WTC11 (cell line): ENCODE measurements at regions of chr1 and their contacts with region 1.

Region 1: DNA sequence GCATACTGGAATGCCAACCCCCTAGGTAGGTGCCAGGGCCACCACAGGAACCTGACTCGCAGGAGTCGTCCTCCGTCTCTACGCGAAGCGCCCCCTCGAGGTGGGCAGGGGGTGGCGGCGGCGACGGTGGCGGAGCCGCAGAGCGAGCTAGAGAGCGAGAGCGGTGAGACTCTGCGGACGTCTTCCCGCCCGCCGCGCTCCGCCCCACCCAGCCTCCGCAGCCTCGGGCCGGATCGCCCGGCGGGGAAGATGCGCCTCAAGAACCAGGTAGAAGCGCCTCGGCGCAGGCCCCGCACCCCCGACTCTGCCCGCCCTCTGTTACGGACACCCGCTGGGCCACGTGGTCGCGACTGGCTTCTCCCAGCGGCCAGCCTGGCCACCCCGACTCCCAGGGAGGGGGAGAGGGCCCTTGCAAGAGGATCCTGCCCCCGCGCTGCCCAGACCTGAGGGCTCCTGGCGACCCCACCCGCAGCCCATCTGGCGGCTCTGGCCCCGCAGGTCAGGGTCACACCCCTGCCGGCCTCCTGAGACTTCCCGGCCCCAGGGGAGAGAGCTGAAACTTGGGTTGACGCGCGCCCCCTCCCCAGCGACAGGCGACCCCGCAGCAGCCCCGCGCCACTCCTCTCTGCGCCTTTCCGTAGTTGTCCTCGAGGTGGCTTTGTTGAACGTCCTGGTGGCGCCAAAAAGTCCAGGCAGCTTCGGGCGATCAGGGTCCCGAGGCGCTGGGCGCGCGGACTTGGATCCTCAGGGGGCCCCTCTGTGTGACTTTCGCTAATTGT is 24.4 kb upstream of the AGBL4 start:
- DNase-seq: peak; percentile 91
- ATAC-seq: peak; percentile 94
- H3K4me3 Mint-ChIP-seq: peak overlapping the region; percentile 63
- H3K27ac Mint-ChIP-seq: no peak overlapping the region
- H3K4me1 Mint-ChIP-seq: peaks cover 16% of the 10 kb centered on the region
- H3K27me3 Mint-ChIP-seq: peaks cover 44% of the 10 kb centered on the region
- CTCF ChIP-seq: peak; percentile 68

Region 2: DNA sequence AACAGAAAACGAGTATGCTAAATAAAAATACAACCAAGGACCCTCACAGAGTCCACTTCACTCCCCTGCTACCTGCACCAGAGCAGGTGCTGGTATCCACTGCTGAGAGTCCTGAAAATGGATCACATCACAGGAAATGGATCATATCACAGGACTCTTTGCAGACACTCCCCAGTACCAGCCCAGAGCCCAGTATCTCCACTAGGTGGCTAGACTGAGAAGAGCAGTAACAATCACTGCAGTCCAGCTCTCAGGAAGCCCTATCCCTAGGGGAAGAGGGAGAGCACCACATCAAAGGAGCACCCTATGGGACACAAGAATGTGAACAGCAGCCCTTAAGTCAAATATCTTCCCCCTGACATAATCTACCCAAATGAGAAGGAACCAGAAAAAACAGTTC is 52.4 kb before region 1 on chr1:
- CTCF ChIA-PET with region 1: interaction called, 18 read pairs
- POLR2A ChIA-PET with region 1: no interaction called
- DNase-seq: peak; percentile 45
- ATAC-seq: peak; percentile 78
- H3K4me3 Mint-ChIP-seq: no peak overlapping the region
- H3K27ac Mint-ChIP-seq: no peak overlapping the region
- H3K4me1 Mint-ChIP-seq: no peaks in the 10 kb centered on the region
- H3K27me3 Mint-ChIP-seq: no peaks in the 10 kb centered on the region; the same call in 1 of the 2 replicates
- CTCF ChIP-seq: 0 out of 2 replicates have a peak, but pooled peaks have one; percentile 20

Region 3: DNA sequence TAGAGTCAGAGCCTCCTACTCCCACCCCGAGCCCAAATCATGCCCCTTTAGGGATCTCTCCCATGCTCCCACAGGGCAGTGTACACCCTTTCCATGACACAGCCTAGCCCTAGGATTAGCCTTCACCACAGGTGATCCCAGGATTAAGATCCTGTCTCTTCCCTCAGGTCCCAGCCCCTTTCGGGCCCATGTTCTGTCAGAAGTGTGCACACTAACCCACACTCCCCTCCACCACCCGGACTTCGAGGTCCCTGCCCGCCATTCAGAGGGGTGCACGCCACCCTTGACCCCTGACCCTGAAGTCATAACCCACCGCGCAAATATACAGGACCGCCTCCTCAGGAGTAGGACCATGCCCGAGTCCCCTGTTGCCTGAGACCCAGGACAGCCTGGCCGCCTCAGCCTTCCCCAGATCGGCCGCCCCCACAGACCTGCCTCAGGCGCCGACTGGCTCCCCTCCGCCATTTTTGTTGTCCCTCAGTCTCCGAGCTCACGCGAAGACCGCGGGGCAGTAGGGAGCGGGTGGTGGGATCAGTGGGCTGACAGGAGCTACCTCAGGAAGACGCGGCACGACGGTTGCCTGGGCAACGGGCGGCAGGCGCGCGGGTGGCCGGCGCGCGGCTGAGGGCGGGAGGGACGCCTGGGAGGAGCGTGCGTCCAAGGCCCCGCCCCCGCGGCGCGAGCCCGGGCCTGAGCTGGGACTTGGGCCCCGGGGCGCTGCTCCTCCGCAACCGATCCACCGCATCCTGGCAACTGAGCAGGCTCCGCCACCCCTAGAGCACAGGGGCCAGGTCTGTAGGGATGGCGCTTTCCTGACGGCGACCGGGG is 24.6 kb before region 1 on chr1 and contains the start of gene AGBL4:
- CTCF ChIA-PET with region 1: interaction called, 44 read pairs
- POLR2A ChIA-PET with region 1: no interaction called
- DNase-seq: peak; percentile 82
- ATAC-seq: peak; percentile 96
- H3K4me3 Mint-ChIP-seq: no peak within 1 kb of the TSS
- H3K27ac Mint-ChIP-seq: no peak within 1 kb of the TSS
- H3K4me1 Mint-ChIP-seq: peaks cover 6% of the 10 kb centered on the region; the same call in 1 of the 2 replicates
- H3K27me3 Mint-ChIP-seq: peaks cover 22% of the 10 kb centered on the region
- CTCF ChIP-seq: no peak
- total RNA-seq, gene AGBL4: 0.30 to 0.87 TPM (median 0.32 TPM) in 3 replicates